ENCODE measurements at regions of chr19 and their contacts with region 1.

Region 1: GRCh38 chr19:6372594-6373095 is at the start of gene ALKBH7:
- DNase-seq: peak; percentile 98
- ATAC-seq: peak; percentile 84
- H3K4me3 Mint-ChIP-seq: peak within 1 kb of the TSS; percentile 80
- H3K27ac Mint-ChIP-seq: peak within 1 kb of the TSS; percentile 92
- H3K4me1 Mint-ChIP-seq: peaks cover 11% of the 10 kb centered on the region
- H3K27me3 Mint-ChIP-seq: no peaks in the 10 kb centered on the region
- total RNA-seq, gene ALKBH7: 22.8 to 44.7 TPM

Region 2: DNA sequence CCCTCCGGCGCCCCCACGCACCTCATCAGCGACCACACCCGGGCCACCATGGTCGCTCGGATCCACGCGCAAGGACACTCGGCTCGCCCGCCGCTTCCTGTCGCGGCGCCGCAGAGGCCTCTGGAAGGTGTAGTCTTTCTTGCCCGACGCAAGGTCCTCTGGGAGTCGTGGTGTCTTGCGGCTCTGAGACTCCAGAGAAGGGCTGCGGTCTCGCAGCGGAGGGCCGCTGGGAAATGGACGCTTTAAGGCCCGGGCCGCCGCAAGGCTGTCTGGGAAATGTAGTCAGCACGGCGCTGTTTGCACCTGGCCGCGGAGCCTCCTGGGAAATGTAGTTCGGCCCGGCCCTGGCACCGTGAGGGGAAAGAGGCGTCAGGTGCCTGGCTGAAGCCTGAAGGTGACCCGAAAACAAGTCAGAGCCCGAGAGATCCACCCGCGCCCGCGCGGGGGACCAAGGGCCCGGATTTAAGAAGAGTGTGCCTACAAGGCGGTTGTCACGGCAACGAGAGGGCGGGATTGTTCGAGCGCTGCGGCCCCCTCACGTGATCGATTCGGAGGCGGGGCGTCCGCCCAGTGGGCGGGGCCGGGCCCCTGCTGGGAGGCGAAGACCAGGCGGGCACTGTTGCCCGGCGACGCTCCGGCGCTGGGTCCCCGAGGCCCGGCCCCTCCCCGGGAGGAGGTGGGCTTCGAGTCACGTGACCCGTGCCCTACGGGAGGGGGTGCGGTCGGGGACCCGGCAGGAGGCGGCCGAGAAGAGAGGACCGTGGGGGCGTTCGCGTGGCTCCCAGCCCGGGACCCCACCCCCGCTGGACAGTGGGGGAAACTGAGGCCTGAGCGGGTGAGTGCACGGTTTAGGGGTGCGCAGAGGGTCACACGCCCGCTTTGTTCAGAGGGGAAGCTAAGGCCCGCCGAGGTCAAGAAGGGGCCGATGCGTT is 691.9 kb before region 1 on chr19 and contains the starts of genes HSD11B1L and MICOS13:
- CTCF ChIA-PET with region 1: no interaction called
- POLR2A ChIA-PET with region 1: no interaction called
- intact Hi-C with region 1: loop called in 1 of 2 experiments (anchors 1 kb)
- DNase-seq: peak; percentile 99
- ATAC-seq: peak; percentile 97
- H3K4me3 Mint-ChIP-seq: peak within 1 kb of the TSS; percentile 99
- H3K27ac Mint-ChIP-seq: peak within 1 kb of the TSS; percentile 94
- H3K4me1 Mint-ChIP-seq: peaks cover 20% of the 10 kb centered on the region
- H3K27me3 Mint-ChIP-seq: no peaks in the 10 kb centered on the region
- total RNA-seq, gene HSD11B1L: 2.0 to 3.2 TPM
- total RNA-seq, gene MICOS13: 50.9 to 52.1 TPM

Region 3: GRCh38 chr19:5947435-5947834 is 425.2 kb before region 1 on chr19:
- CTCF ChIA-PET with region 1: no interaction called
- POLR2A ChIA-PET with region 1: no interaction called
- intact Hi-C with region 1: no loop called
- DNase-seq: no peak
- ATAC-seq: no peak
- H3K4me3 Mint-ChIP-seq: no peak overlapping the region
- H3K27ac Mint-ChIP-seq: peak overlapping the region; percentile 79
- H3K4me1 Mint-ChIP-seq: peaks cover 66% of the 10 kb centered on the region
- H3K27me3 Mint-ChIP-seq: no peaks in the 10 kb centered on the region

Region 4: DNA sequence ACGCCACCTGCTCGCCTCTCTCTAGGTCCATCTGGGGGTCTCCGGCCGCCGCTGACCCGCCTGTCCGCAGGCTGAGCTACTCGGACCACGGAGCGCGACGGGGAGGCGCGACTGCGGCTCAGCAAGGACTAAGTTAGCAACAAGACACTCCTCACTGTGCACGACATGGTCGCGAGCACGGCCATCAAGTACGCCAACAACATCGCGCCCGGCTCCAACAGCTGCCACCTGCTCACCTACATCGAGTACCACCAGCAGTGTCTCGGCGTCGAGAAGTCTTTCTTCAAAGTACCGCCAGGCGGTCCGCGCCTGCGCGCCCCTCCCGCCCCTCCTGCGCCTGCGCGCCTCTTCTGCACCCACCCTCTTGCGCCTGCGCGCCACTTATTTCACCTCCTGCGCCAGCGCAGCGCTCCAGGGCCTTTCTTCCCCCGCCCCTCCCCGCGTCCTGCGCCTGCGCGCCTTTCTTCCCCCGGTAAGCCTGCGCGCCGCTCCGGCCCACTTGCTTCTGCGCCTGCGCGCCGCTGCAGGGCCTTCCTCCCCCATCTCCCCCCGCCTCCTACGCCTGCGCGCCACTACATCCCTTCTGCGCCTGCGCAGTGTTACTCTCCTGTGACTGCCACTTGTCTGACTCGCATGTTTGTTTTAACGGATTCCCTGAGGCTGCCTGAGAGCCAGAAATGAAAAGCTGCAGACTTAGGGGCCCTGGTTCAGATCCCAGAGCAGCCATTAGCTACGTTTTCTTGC is 173.2 kb before region 1 on chr19:
- CTCF ChIA-PET with region 1: no interaction called
- POLR2A ChIA-PET with region 1: no interaction called
- intact Hi-C with region 1: loop called in 1 of 2 experiments (anchors 1 kb)
- DNase-seq: peak; percentile 100
- ATAC-seq: peak; percentile 95
- H3K4me3 Mint-ChIP-seq: peak overlapping the region; percentile 100
- H3K27ac Mint-ChIP-seq: peak overlapping the region; percentile 92
- H3K4me1 Mint-ChIP-seq: peaks cover 12% of the 10 kb centered on the region
- H3K27me3 Mint-ChIP-seq: no peaks in the 10 kb centered on the region

Region 5: DNA sequence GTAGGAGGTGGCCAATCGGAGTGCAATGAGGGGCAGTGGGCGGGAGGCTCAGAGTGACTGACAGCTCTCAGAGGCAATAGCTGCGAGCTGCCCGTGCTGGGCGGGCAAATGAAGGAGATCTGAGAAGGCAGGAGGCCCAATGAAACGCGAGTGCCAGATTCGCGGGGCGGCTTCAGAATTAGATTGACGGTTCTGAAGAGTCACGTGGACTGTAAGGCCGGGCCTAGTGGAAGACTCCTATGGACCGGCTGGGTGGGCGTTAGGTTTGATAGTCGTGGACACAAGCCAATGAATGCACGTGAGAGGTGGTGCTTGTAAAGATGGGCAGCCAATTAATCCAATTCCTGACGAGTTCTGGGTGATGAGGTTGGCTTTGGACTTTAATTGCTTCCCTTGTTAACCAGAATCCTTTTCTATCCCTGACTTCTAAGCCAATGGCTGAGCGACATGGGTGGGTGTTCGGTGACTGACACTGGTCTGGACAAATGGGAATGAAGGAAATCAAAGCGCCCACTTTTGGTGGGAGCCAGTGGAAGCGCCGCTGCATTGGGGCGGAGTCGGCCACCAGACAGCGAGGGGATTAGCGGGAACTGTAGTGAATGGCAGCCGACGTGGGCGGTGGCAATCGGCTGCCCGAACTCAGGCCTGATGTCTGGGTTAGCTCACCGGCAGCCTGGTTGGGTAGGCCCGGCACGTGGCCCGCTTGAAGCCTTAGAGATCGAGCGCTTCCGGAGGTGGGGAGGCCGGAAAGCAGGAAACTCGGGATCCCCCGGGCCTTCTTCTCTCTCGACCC is 52.5 kb after region 1 on chr19:
- CTCF ChIA-PET with region 1: interaction called, 9 read pairs
- POLR2A ChIA-PET with region 1: interaction called, 13 read pairs
- intact Hi-C with region 1: loop called (anchors 1 kb)
- DNase-seq: peak; percentile 100
- ATAC-seq: peak; percentile 88
- H3K4me3 Mint-ChIP-seq: peak overlapping the region; percentile 73
- H3K27ac Mint-ChIP-seq: peak overlapping the region; percentile 98
- H3K4me1 Mint-ChIP-seq: peaks cover 31% of the 10 kb centered on the region
- H3K27me3 Mint-ChIP-seq: no peaks in the 10 kb centered on the region

Region 6: GRCh38 chr19:6516659-6517291 is 144.1 kb after region 1 on chr19:
- CTCF ChIA-PET with region 1: no interaction called
- POLR2A ChIA-PET with region 1: no interaction called
- intact Hi-C with region 1: loop called in 1 of 2 experiments (anchors 1 kb)
- DNase-seq: peak; percentile 97
- ATAC-seq: peak; percentile 86
- H3K4me3 Mint-ChIP-seq: peak overlapping the region; percentile 79
- H3K27ac Mint-ChIP-seq: peak overlapping the region; percentile 92
- H3K4me1 Mint-ChIP-seq: peaks cover 34% of the 10 kb centered on the region
- H3K27me3 Mint-ChIP-seq: peaks cover 2% of the 10 kb centered on the region

Region 7: DNA sequence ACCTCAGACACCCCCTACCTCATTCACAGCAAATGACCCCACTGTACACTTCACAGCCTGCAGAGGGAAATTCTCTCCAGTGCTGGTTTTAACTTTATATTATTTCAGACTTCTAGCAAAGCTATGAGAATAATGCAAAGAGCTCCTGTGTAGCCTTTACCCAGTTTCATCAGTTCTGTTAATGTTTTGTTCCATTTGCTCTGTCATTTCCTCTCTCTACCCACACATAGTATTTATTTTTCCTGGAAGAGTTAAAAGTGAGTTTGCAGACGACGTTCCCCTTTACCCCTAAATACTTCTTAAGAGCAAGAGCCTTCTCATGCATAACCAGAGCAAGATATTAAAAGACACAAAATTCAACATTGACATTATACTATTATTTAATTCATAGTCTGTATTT is 464.9 kb after region 1 on chr19:
- CTCF ChIA-PET with region 1: no interaction called
- POLR2A ChIA-PET with region 1: no interaction called
- intact Hi-C with region 1: no loop called
- DNase-seq: no peak
- ATAC-seq: peak; percentile 55
- H3K4me3 Mint-ChIP-seq: no peak overlapping the region
- H3K27ac Mint-ChIP-seq: peak overlapping the region; percentile 84
- H3K4me1 Mint-ChIP-seq: peaks cover 24% of the 10 kb centered on the region
- H3K27me3 Mint-ChIP-seq: no peaks in the 10 kb centered on the region

Region 8: DNA sequence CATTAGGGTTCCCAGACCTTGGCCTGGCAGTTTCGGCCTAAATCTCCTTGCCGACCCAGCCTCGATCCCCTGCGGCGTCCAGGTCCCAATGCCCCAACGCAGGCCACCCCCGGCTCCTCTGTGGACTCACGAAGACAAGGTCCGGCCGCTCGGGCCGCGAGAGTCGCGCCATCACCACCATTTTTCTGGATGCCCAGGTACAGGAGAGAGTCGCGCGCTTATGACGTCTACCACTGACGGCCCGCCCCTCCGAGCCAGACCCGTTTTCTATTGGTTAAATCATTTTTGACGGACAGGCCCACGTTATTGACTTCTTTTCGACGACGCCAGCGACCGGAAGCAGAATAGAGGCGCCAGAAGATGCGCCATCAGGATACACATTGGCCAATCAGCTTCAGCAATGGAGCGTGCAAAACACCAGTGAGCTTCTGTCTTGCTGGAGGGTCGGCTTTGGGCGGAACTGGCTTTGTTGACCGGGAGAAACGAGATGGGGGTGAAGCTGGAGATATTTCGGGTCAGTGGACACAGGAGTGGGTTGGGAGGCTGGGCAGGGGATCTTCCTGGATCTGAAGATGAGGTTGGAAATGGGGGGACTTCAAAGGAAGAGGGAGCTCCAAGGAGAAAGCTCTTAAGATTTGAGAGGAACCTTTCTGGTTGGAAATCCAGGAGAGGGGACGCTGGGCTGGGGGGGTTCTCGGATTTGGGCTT is 1256.9 kb after region 1 on chr19 and contains the starts of genes PET100 and XAB2:
- CTCF ChIA-PET with region 1: no interaction called
- POLR2A ChIA-PET with region 1: no interaction called
- intact Hi-C with region 1: loop called in 1 of 2 experiments (anchors 5 kb)
- DNase-seq: peak; percentile 97
- ATAC-seq: peak; percentile 99
- H3K4me3 Mint-ChIP-seq: peak within 1 kb of the TSS; percentile 88
- H3K27ac Mint-ChIP-seq: peak within 1 kb of the TSS; percentile 97
- H3K4me1 Mint-ChIP-seq: peaks cover 32% of the 10 kb centered on the region
- H3K27me3 Mint-ChIP-seq: no peaks in the 10 kb centered on the region
- total RNA-seq, gene PET100: 45.1 to 99.4 TPM
- total RNA-seq, gene XAB2: 45.9 to 48.3 TPM